HepG2 (cell line): ENCODE measurements at regions of chr11 and their contacts with region 1.

Region 1: DNA sequence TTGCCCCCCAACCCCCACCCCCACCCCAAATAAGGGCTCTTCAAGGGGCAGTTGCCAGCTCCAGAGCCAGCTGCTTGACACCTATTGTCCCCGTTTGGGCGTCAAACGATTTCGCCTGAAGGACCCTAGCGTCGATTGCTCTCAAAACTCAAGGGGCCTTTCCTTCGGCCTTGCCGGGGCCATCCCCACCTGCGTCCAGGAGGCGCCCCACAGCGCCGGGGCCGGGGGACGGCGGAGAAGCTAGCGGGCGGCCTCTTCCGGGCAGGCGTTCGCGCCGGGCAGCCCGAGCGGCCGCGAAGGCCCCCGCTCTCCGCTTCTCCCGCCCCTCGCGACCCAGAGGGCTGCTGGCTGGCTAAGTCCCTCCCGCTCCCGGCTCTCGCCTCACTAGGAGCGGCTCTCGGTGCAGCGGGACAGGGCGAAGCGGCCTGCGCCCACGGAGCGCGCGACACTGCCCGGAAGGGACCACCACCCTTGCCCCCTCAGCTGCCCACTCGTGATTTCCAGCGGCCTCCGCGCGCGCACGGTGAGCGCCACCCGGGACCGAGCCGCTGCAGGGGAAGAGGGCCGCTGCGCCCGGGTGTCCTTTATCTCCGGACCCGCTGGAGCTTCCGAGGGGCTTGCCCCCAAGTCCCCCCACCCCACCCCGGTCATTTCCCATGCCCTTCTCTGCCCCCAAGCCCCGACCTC is at the start of gene CAPRIN1:
- DNase-seq: peak; percentile 89
- ATAC-seq: peak; percentile 88
- H3K4me3 ChIP-seq: peak within 1 kb of the TSS; percentile 95 to 100 (median 95)
- H3K27ac ChIP-seq: peak within 1 kb of the TSS; percentile 99
- H3K4me1 ChIP-seq: peaks cover 38% of the 10 kb centered on the region
- H3K27me3 ChIP-seq: no peaks in the 10 kb centered on the region
- CTCF ChIP-seq: peak; percentile 44
- EP300 ChIP-seq: no peak
- POLR2A ChIP-seq: peak; percentile 77 to 84
- RAD21 ChIP-seq: peak; percentile 74
- total RNA-seq, gene CAPRIN1: 162 and 284 TPM in 2 replicates

Region 2: DNA sequence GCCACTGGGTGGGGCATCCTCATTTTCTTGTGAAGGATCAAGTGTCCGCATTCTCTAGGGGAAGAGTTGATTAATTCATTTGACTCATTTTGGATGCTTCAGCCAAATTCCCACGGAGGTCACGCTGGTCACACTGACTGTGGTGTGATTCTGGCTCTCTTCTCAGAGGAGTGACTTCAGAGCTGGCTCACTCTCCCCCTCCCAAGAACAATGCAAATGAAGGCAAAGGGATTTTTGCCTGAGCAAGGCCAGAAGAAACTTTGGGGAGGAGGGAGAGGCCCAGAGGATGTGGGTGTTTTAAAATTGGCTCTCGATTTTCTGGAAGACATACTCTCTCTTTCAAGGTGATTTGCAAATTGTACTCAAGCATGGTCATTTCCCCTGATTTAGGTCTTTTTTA is 108.5 kb before region 1 on chr11:
- CTCF ChIA-PET with region 1: no interaction called
- POLR2A ChIA-PET with region 1: no interaction called
- in situ Hi-C with region 1: no loop called
- intact Hi-C with region 1: no loop called
- DNase-seq: no peak
- ATAC-seq: no peak
- H3K4me3 ChIP-seq: no peak overlapping the region
- H3K27ac ChIP-seq: no peak overlapping the region
- H3K4me1 ChIP-seq: no peaks in the 10 kb centered on the region
- H3K27me3 ChIP-seq: 0 out of 5 replicates have a peak, but pooled peaks cover 0 to 2% of the 10 kb centered on the region in 2 experiments
- CTCF ChIP-seq: no peak
- EP300 ChIP-seq: no peak
- POLR2A ChIP-seq: no peak
- RAD21 ChIP-seq: no peak

Region 3: GRCh38 chr11:34006876-34007275 is 44.6 kb before region 1 on chr11:
- CTCF ChIA-PET with region 1: no interaction called
- POLR2A ChIA-PET with region 1: no interaction called
- in situ Hi-C with region 1: no loop called
- intact Hi-C with region 1: no loop called
- DNase-seq: no peak
- ATAC-seq: no peak
- H3K4me3 ChIP-seq: no peak overlapping the region
- H3K27ac ChIP-seq: no peak overlapping the region
- H3K4me1 ChIP-seq: 0 out of 2 replicates have a peak, but pooled peaks cover 6% of the 10 kb centered on the region
- H3K27me3 ChIP-seq: no peaks in the 10 kb centered on the region; a peak in 1 of 5 replicates
- CTCF ChIP-seq: no peak
- EP300 ChIP-seq: no peak
- POLR2A ChIP-seq: no peak
- RAD21 ChIP-seq: no peak

Region 4: DNA sequence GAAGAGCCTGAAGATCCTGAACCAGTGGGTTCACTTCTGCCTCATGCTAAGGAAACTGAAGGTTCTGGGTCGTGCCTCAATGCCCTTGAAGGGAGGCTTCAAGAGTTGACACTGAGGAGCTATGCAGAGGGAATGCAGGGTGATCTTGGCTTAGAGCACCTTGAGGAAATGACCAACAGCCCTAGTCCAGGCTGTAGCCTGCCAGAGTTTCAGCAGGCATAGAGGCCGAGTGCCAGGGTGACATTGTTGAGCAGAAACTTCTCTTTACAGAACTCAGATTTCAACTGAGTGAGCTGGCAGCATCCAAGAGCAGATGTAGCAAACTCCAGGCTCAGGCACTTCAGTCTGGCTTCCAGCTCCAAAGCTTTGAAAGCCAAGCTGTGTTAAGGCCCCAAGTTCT is 23.1 kb before region 1 on chr11:
- CTCF ChIA-PET with region 1: no interaction called
- POLR2A ChIA-PET with region 1: interaction called, 27 read pairs
- in situ Hi-C with region 1: no loop called
- intact Hi-C with region 1: no loop called
- DNase-seq: no peak
- ATAC-seq: peak; percentile 82
- H3K4me3 ChIP-seq: peak overlapping the region; percentile 42 to 70 (median 60)
- H3K27ac ChIP-seq: peak overlapping the region; percentile 55
- H3K4me1 ChIP-seq: peaks cover 20% of the 10 kb centered on the region
- H3K27me3 ChIP-seq: no peaks in the 10 kb centered on the region
- CTCF ChIP-seq: no peak
- EP300 ChIP-seq: no peak
- POLR2A ChIP-seq: no peak
- RAD21 ChIP-seq: no peak

Region 5: GRCh38 chr11:34105079-34105956 is 53.8 kb after region 1 on chr11 and contains the start of gene NAT10:
- CTCF ChIA-PET with region 1: no interaction called
- POLR2A ChIA-PET with region 1: interaction called, 30 read pairs
- in situ Hi-C with region 1: no loop called
- intact Hi-C with region 1: loop called (anchors 1 kb)
- DNase-seq: peak; percentile 97
- ATAC-seq: peak; percentile 92
- H3K4me3 ChIP-seq: peak within 1 kb of the TSS; percentile 89 to 92 (median 91)
- H3K27ac ChIP-seq: peak within 1 kb of the TSS; percentile 88
- H3K4me1 ChIP-seq: peaks cover 27% of the 10 kb centered on the region
- H3K27me3 ChIP-seq: no peaks in the 10 kb centered on the region; a peak in 1 of 5 replicates
- CTCF ChIP-seq: peak; percentile 53
- EP300 ChIP-seq: peak in 1 of 2 experiments; percentile 16; a peak in 1 of 4 replicates
- POLR2A ChIP-seq: peak; percentile 94 to 98
- RAD21 ChIP-seq: no peak; the same call in none of the 2 replicates
- total RNA-seq, gene NAT10: 51.9 and 68.5 TPM in 2 replicates